ENCODE measurements at regions of chr9 and their contacts with region 1.

Region 1: GRCh38 chr9:108535526-108535925 is 320.3 kb downstream of the ACTL7B start:
- DNase-seq: peak; percentile 26
- H3K4me3 ChIP-seq: no peak overlapping the region
- H3K27ac ChIP-seq: no peak overlapping the region
- H3K4me1 ChIP-seq: no peaks in the 10 kb centered on the region
- H3K27me3 ChIP-seq: peaks cover 0 to 2% of the 10 kb centered on the region in 2 experiments
- CTCF ChIP-seq: peak; percentile 45 to 49
- POLR2A ChIP-seq: no peak

Region 2: DNA sequence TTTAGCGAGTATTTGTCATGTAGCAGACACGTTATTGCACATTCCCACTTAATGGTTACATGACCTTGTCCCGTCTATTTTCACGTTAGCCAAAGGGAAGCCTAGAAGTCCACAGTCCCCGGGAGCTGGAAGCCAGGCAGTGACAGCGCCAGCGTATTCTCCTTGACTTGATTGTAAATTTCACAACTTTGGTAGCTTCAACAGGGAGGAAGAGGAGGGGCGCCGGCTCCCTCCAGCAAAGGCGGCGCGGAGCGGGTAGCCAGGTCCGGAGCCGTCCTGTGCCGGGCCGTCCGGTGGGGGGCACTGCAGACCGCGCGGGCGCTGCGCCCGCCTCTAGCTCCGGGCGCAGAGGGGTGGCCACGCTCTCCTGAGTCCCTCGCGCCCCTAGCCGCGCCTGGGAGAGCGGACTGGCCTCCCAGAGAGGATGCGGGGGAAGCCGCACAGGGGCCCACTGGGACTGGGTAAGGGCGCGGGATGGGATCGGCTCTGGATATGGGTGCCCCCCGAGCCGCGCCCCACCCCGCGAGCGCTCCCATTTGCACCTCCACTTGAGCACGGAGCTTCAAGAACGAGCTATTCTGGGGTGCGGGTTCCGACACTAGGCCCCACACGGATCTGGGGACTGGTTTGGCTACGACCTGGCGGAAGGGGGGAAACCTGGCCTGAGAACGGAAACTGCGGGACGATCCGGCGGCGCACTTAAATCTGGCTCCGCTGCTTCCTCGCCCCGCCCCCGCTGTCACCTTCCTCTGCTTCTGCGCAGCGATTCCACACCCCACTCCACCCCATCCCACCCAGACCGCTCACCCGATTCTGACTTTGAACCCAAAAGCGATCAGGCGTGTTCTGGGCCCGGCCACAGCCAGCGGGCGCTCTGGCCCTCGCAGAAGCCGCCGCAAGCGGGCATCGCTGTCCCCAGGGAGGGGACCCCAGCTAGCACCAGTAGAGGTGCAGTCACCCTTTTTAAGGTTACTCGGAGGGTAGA is 1069.8 kb before region 1 on chr9:
- CTCF ChIA-PET with region 1: interaction called, 15 read pairs
- POLR2A ChIA-PET with region 1: no interaction called
- dilution Hi-C with region 1: no loop called
- intact Hi-C with region 1: loop called (anchors 1 kb)
- DNase-seq: peak; percentile 47
- H3K4me3 ChIP-seq: peak overlapping the region; percentile 32 to 57 (median 46)
- H3K27ac ChIP-seq: no peak overlapping the region
- H3K4me1 ChIP-seq: peaks cover 3% of the 10 kb centered on the region
- H3K27me3 ChIP-seq: peaks cover 0 to 3% of the 10 kb centered on the region in 2 experiments
- CTCF ChIP-seq: peak; percentile 86 to 88
- POLR2A ChIP-seq: no peak

Region 3: GRCh38 chr9:107484117-107484723 is 1051.3 kb before region 1 on chr9:
- CTCF ChIA-PET with region 1: interaction called, 15 read pairs
- POLR2A ChIA-PET with region 1: no interaction called
- dilution Hi-C with region 1: no loop called
- intact Hi-C with region 1: loop called (anchors 1 kb)
- DNase-seq: peak; percentile 84
- H3K4me3 ChIP-seq: no peak overlapping the region
- H3K27ac ChIP-seq: no peak overlapping the region
- H3K4me1 ChIP-seq: peaks cover 8% of the 10 kb centered on the region
- H3K27me3 ChIP-seq: peaks cover 3 to 8% of the 10 kb centered on the region in 2 experiments
- CTCF ChIP-seq: peak; percentile 36 to 45
- POLR2A ChIP-seq: no peak

Region 4: GRCh38 chr9:107989544-107989943 is 546.0 kb before region 1 on chr9:
- CTCF ChIA-PET with region 1: no interaction called
- POLR2A ChIA-PET with region 1: no interaction called
- dilution Hi-C with region 1: no loop called
- intact Hi-C with region 1: no loop called
- DNase-seq: no peak
- H3K4me3 ChIP-seq: no peak overlapping the region
- H3K27ac ChIP-seq: no peak overlapping the region
- H3K4me1 ChIP-seq: no peaks in the 10 kb centered on the region
- H3K27me3 ChIP-seq: no peaks in the 10 kb centered on the region
- CTCF ChIP-seq: no peak
- POLR2A ChIP-seq: no peak

Region 5: GRCh38 chr9:108468402-108468801 is 67.1 kb before region 1 on chr9:
- CTCF ChIA-PET with region 1: interaction called, 4 read pairs
- POLR2A ChIA-PET with region 1: no interaction called
- dilution Hi-C with region 1: no loop called
- intact Hi-C with region 1: loop called (anchors 1 kb)
- DNase-seq: peak; percentile 36
- H3K4me3 ChIP-seq: no peak overlapping the region
- H3K27ac ChIP-seq: no peak overlapping the region
- H3K4me1 ChIP-seq: peaks cover 9% of the 10 kb centered on the region
- H3K27me3 ChIP-seq: no peaks in the 10 kb centered on the region
- CTCF ChIP-seq: peak; percentile 62 to 63
- POLR2A ChIP-seq: no peak

Measured in endothelial cell of umbilical vein (primary cell).